ENCODE measurements at regions of chr2 and their contacts with region 1.

Region 1: DNA sequence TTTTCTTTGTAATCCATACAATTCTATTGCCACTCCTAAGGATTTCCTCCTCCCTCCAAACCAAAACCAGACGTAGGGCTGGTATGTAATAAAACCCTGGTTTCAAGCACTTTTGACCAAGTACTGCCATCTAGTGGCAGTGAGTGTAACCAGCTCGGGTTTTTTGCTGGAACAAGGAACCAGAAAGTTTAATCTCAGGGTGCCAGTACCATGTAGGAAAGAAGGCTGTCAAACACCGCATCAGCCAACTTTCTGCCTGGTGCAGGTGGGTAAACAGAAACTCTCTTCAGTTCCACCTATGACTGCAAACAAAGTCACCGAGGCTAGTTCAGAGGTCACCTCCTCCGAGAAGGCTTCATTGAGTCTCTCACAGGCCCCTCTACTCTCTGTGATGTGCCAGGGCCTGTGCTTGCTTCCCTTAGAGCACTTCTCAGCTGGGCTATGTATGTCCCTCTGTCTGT is 10.2 kb upstream of the THNSL2 start:
- DNase-seq: peak; percentile 17 to 76 (median 42)
- ATAC-seq: no peak
- H3K4me3 ChIP-seq: no peak overlapping the region
- H3K4me3 Mint-ChIP-seq: no peak overlapping the region
- H3K27ac ChIP-seq: no peak overlapping the region
- H3K27ac Mint-ChIP-seq: no peak overlapping the region
- H3K4me1 ChIP-seq: peaks cover 2% of the 10 kb centered on the region
- H3K4me1 Mint-ChIP-seq: no peaks in the 10 kb centered on the region
- H3K27me3 ChIP-seq: no peaks in the 10 kb centered on the region
- H3K27me3 Mint-ChIP-seq: no peaks in the 10 kb centered on the region
- CTCF ChIP-seq: peak; percentile 94

Region 2: DNA sequence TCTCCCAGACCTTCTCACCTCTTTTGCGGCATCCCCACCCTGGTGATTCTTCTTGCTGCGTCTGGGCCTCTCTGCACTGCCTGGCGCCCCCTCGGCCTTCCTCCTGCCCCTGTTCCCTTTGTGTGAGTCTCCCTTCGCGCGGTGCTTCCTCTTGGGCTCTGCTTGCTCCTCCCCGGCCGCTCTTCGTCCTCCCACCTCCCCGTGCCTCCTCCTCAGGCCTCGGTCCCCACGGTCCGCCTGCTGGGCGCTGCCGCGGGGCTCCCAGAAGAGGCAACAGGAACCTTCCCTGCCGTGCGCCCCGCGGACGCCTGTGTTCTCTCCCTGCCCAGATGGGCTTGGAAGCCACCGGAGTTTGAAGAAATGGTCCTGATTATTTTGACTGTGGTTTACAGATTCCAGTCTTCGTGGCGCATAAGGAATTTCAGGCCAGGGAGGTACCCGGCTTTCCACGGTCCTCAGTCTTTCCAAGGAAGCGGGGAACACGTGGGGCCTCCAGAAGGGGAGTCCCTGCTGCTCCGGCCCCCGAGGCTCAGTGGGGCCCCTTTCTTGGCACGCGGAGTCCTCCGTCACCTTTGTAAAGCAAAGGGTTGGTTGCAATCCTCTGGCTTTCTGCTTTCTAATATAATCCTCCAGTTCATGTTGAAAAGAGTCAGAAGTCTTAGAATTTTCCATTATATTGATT is 156.8 kb before region 1 on chr2:
- CTCF ChIA-PET with region 1: no interaction called
- POLR2A ChIA-PET with region 1: no interaction called
- intact Hi-C with region 1: loop called (anchors 5 to 10 kb)
- DNase-seq: no peak
- ATAC-seq: no peak
- H3K4me3 ChIP-seq: no peak overlapping the region
- H3K4me3 Mint-ChIP-seq: no peak overlapping the region
- H3K27ac ChIP-seq: no peak overlapping the region
- H3K27ac Mint-ChIP-seq: no peak overlapping the region
- H3K4me1 ChIP-seq: peaks cover 8% of the 10 kb centered on the region
- H3K4me1 Mint-ChIP-seq: peaks cover 6% of the 10 kb centered on the region
- H3K27me3 ChIP-seq: no peaks in the 10 kb centered on the region
- H3K27me3 Mint-ChIP-seq: peaks cover 5% of the 10 kb centered on the region
- CTCF ChIP-seq: no peak

Measured in CD4-positive, alpha-beta T cell (primary cell).